AG04450 (cell line): ENCODE measurements at regions of chr11 and their contacts with region 1.

Region 1: DNA sequence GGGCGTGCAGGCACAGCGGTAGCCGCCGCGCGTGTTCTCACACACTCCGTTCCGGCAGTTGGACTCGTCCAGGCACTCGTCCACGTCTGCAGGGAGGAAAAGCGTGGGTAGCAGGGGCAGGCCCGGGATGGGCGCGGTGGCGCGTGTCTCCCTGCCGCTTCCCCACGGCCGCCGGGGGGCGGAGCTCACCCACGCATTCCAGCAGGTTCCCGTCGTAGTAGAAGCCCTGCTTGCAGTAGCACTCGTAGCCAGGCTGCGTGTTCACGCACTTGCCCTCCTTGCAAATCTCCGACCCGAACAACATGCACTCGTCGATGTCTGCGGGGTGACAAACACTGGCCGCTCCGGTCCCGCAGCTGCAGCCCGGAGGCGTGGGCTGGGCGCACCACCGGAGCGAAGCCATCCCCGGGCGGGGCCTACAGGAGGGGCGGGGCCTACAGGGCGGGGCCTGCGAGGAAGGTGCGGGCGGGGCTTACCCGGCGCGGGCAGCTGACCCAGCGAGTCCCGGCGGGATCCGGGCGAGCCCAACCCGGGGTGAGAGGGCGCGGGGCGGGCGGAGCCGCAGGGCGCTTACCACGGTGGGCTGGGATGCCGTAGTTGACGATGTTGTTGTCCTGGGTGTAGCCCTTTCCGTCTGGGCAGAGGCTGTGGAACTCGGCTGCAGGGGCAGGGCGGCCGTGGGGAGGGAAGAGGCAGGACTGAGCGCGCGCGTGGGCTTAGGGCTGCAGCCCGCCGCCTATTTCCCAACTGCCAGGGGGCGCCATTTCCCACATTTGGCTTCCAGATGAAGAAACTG is 15.6 kb downstream of the SCYL1 start:
- DNase-seq: peak; percentile 58
- H3K4me3 ChIP-seq: peak overlapping the region; percentile 60
- H3K27ac ChIP-seq: peak overlapping the region; percentile 57
- H3K27me3 ChIP-seq: no peaks in the 10 kb centered on the region
- CTCF ChIP-seq: peak; percentile 83

Region 2: GRCh38 chr11:65530157-65530496 is 10.4 kb before region 1 on chr11:
- CTCF ChIA-PET with region 1: interaction called, 11 read pairs
- POLR2A ChIA-PET with region 1: interaction called, 4 read pairs
- DNase-seq: no peak
- H3K4me3 ChIP-seq: no peak overlapping the region
- H3K27ac ChIP-seq: no peak overlapping the region
- H3K27me3 ChIP-seq: no peaks in the 10 kb centered on the region
- CTCF ChIP-seq: peak; percentile 36

Region 3: GRCh38 chr11:65555693-65556231 is 15.3 kb after region 1 on chr11:
- CTCF ChIA-PET with region 1: interaction called, 28 read pairs
- POLR2A ChIA-PET with region 1: interaction called, 7 read pairs
- DNase-seq: peak; percentile 29
- H3K4me3 ChIP-seq: peak overlapping the region; percentile 29; the same call in 1 of the 2 replicates
- H3K27ac ChIP-seq: peak overlapping the region; percentile 33
- H3K27me3 ChIP-seq: no peaks in the 10 kb centered on the region
- CTCF ChIP-seq: no peak

Region 4: GRCh38 chr11:65560555-65561418 is 20.3 kb after region 1 on chr11:
- CTCF ChIA-PET with region 1: interaction called, 28 read pairs
- POLR2A ChIA-PET with region 1: interaction called, 7 read pairs
- DNase-seq: no peak
- H3K4me3 ChIP-seq: no peak overlapping the region
- H3K27ac ChIP-seq: peak overlapping the region; percentile 11
- H3K27me3 ChIP-seq: no peaks in the 10 kb centered on the region
- CTCF ChIP-seq: no peak

Region 5: GRCh38 chr11:65569973-65570918 is 29.8 kb after region 1 on chr11 and contains the start of gene ZNRD2:
- CTCF ChIA-PET with region 1: interaction called, 11 read pairs
- POLR2A ChIA-PET with region 1: interaction called, 7 read pairs
- DNase-seq: peak; percentile 96
- H3K4me3 ChIP-seq: peak within 1 kb of the TSS; percentile 98
- H3K27ac ChIP-seq: peak within 1 kb of the TSS; percentile 95
- H3K27me3 ChIP-seq: no peaks in the 10 kb centered on the region
- CTCF ChIP-seq: peak; percentile 26
- polyA plus RNA-seq, gene ZNRD2: 23.5 and 44.3 TPM in 2 replicates

Region 6: DNA sequence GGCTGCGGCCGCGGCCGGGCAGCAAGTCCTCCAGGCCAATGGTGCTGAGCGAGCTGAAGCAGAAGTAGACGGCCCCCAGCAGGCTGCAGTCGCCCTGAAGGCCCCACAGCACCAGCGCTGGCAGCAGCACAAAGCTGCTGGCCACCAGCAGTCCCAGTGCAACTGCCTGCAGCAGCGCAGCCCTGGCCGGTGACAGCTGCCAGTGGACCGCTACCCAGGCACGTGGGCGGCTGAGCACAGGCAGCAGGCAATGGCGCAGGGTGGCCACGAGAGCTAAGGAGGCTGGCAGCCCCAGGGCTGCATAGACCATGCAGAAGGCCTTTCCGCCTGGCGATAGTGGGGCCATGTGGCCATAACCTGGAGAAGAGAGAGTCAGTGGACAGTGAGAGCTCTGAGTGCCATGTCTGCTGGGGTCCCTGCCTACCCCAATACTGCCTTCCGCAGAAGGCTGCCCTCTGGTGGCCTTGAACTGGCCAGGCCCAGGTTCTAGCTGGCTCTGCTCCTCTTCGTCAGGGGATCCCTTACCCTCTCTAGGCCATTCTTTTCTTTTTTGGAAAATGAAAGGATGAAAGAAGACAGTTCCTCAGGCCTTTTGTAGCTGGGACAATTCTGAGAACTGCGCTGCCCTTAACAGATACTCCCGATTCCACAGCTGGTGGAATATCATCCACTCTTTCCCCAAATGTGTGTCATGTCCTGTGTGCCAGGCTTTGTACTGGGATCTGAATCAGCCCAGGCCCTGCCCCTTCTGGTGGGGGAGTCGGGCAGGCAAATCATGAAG is 53.2 kb after region 1 on chr11:
- CTCF ChIA-PET with region 1: interaction called, 48 read pairs
- POLR2A ChIA-PET with region 1: interaction called, 4 read pairs
- DNase-seq: no peak
- H3K4me3 ChIP-seq: no peak overlapping the region
- H3K27ac ChIP-seq: no peak overlapping the region
- H3K27me3 ChIP-seq: no peaks in the 10 kb centered on the region
- CTCF ChIP-seq: peak; percentile 75

Region 7: DNA sequence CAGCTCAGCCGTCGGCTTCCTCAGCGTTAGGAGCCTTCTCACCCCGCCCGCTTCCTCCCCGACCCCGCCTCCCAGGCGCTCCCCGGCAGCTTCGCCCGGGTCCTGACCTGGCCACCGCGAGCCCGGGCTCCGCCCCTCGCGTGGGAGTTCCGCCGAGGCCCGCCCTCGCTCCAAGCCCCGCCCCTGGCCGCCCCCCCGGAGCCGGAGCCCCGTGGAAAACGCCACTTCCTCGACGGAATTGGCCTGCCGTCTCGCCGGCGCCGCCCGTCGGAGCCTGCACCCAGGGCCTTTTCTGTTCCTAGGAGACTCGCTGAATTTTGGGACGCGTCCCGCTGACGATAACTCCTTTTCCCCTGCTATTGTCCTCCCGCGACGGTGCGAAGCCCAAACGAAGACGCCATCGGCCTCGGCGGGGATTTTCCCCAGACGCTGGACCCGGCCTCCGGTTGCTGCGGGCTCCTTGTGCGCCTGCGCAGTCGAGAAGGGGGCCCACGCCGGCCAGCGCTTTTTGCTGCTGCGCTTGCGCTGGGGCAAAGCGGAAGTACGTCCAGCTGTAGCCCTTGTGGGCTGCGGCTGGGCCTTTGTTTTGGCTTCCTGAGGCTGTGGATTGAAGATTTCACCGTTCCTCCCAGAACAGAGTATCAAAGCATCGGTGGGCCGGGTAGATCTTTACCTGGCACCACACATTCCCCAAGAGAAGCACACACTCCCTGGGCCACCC is 112.2 kb after region 1 on chr11:
- CTCF ChIA-PET with region 1: no interaction called
- POLR2A ChIA-PET with region 1: no interaction called
- DNase-seq: peak; percentile 89
- H3K4me3 ChIP-seq: peak overlapping the region; percentile 63
- H3K27ac ChIP-seq: peak overlapping the region; percentile 98
- H3K27me3 ChIP-seq: no peaks in the 10 kb centered on the region
- CTCF ChIP-seq: no peak